RWPE1 (cell line): ENCODE measurements at regions of chr1 and their contacts with region 1.

Region 1: GRCh38 chr1:186155594-186155993 is 219.5 kb downstream of the TPR start:
- DNase-seq: peak; percentile 57
- H3K27ac ChIP-seq: no peak overlapping the region
- CTCF ChIP-seq: peak; percentile 64

Region 2: GRCh38 chr1:186094170-186094569 is 61.4 kb before region 1 on chr1:
- CTCF ChIA-PET with region 1: no interaction called
- POLR2A ChIA-PET with region 1: no interaction called
- DNase-seq: no peak
- H3K27ac ChIP-seq: no peak overlapping the region
- CTCF ChIP-seq: no peak

Region 3: DNA sequence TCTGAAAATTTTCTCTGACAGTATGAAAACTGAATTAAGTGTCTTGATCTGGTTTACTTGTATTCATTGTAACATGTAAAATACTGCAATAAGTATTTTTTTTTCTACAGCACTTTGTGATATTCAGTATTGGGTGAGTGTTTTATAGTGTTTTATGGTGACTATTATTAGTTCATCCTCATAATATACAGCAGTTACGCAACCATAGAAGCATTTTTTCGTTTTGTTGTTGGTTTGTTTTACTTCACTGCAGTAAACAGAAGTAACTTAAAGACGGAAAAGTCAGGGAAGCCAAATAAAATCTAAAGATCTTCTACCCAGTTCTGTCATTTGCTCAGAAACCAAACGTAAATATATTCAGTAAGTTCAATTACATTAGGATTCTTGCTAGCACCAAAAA is 30.6 kb before region 1 on chr1:
- CTCF ChIA-PET with region 1: no interaction called
- POLR2A ChIA-PET with region 1: no interaction called
- DNase-seq: no peak
- H3K27ac ChIP-seq: no peak overlapping the region
- CTCF ChIP-seq: no peak

Region 4: DNA sequence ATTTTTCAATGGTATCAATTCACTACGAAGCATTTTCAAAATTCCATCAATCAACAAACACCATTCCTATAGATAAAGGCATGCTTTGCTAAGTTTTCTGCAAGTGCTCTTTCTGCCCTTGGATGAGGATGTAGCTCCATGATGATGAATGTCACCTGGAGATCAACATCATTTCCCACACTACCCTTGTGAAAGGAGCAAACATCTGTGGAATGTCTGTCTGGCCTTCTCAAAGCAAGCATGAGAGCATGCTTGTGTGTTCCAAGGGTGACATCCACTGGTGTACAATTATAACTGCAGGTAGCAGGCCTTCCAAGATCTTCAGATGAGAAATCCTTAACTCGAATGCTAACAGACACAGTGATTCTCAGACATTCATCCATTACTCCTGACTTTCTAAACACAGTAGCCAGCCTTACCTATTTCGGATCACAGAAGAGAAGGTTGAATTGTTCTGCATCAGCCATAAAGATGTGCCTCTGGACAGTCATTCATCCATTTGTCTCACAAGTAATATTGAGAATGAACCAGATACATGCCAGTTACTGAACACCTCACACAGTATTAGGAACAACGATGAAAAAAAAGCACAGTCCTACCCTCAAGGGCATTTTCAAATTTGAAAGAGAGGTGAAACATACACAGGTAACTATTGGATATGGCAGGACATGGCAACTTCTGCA is 57.1 kb after region 1 on chr1:
- CTCF ChIA-PET with region 1: interaction called, 10 read pairs
- POLR2A ChIA-PET with region 1: no interaction called
- DNase-seq: peak; percentile 69
- H3K27ac ChIP-seq: no peak overlapping the region
- CTCF ChIP-seq: peak; percentile 84